Activated B cell treated with CpG ODN at 0.5 μM for 24 hours (primary cell): ENCODE measurements at regions of chr5 and their contacts with region 1.

Region 1: GRCh38 chr5:73201547-73202513 is 28.8 kb downstream of the TMEM174 start:
- DNase-seq: peak; percentile 46
- ATAC-seq: peak; percentile 56
- H3K4me3 Mint-ChIP-seq: peak overlapping the region; percentile 21
- H3K27ac Mint-ChIP-seq: no peak overlapping the region
- H3K4me1 Mint-ChIP-seq: peaks cover 3% of the 10 kb centered on the region
- H3K27me3 Mint-ChIP-seq: peaks cover 32% of the 10 kb centered on the region
- CTCF ChIP-seq: no peak

Region 2: DNA sequence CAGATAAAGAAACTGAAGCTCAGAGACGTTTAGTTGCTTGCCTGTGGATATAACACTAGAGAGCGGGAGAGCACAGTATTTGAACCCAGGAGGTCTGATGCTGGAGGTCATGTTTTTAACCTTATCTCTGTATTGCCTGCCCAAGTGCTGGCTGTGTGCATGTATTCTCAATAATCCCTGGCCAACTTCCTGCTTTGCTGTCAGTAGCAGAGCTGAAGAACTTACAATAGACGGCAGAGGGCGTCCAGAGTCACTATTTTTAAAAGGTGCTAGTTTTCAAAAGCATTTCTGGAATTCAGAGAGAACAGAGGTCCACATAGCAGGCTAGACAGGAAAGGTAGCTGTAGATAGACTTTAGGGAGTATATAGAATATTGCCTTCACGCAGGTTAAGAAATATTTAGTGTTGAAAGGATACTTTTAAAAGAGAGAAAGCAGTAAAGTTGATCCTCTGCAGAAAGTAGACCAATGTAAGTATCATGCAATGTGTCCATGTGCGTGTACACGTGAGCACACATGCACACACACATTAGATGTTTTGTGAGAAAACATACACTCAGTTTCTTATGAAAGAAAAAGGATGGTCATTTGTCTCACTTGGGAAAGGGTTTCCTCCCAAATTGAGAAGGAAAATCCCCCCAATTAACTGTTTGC is 835.4 kb before region 1 on chr5:
- CTCF ChIA-PET with region 1: no interaction called
- POLR2A ChIA-PET with region 1: no interaction called
- intact Hi-C with region 1: loop called (anchors 5 kb)
- DNase-seq: no peak
- ATAC-seq: peak; percentile 68
- H3K4me3 Mint-ChIP-seq: no peak overlapping the region
- H3K27ac Mint-ChIP-seq: no peak overlapping the region
- H3K4me1 Mint-ChIP-seq: peaks cover 11% of the 10 kb centered on the region
- H3K27me3 Mint-ChIP-seq: no peaks in the 10 kb centered on the region
- CTCF ChIP-seq: no peak

Region 3: DNA sequence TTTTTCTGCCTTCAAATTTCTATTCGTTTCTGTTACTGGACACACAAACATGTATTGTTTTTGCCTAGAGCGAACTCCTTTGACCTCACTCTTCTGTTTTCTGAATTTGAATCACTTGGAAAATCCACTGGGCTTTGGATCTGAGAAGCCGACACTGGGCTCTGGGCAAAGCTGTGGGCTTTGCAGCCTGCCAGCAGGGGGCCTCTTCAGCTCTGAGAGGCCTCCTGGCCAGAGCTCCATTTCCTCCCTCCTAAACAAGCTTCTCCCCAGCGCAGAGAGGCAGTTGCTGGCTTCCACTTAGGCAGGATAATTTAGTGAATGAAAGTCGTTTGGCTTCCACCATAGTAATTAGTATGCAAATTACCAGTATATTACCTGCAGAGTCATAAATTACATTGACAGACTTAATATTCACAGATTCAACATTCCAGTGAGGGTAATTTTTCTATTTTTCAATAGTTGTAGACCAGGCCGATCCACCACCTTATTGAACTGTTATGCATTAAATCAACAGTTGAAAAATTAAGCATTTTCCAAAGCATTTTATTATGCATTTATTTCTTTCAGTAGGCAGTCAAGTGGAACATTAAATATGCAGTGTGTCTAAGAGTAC is 590.6 kb before region 1 on chr5:
- CTCF ChIA-PET with region 1: no interaction called
- POLR2A ChIA-PET with region 1: no interaction called
- intact Hi-C with region 1: loop called (anchors 5 kb)
- DNase-seq: no peak
- ATAC-seq: peak; percentile 69
- H3K4me3 Mint-ChIP-seq: no peak overlapping the region
- H3K27ac Mint-ChIP-seq: no peak overlapping the region
- H3K4me1 Mint-ChIP-seq: peaks cover 4% of the 10 kb centered on the region
- H3K27me3 Mint-ChIP-seq: peaks cover 12% of the 10 kb centered on the region
- CTCF ChIP-seq: no peak

Region 4: GRCh38 chr5:73088026-73088425 is 113.8 kb before region 1 on chr5:
- CTCF ChIA-PET with region 1: no interaction called
- POLR2A ChIA-PET with region 1: no interaction called
- intact Hi-C with region 1: loop called (anchors 1 kb)
- DNase-seq: no peak
- ATAC-seq: no peak
- H3K4me3 Mint-ChIP-seq: no peak overlapping the region
- H3K27ac Mint-ChIP-seq: no peak overlapping the region
- H3K4me1 Mint-ChIP-seq: no peaks in the 10 kb centered on the region
- H3K27me3 Mint-ChIP-seq: no peaks in the 10 kb centered on the region
- CTCF ChIP-seq: no peak